Sigmoid colon (tissue), 7 donors: ENCODE measurements at regions of chr2 and their contacts with region 1.

Region 1: DNA sequence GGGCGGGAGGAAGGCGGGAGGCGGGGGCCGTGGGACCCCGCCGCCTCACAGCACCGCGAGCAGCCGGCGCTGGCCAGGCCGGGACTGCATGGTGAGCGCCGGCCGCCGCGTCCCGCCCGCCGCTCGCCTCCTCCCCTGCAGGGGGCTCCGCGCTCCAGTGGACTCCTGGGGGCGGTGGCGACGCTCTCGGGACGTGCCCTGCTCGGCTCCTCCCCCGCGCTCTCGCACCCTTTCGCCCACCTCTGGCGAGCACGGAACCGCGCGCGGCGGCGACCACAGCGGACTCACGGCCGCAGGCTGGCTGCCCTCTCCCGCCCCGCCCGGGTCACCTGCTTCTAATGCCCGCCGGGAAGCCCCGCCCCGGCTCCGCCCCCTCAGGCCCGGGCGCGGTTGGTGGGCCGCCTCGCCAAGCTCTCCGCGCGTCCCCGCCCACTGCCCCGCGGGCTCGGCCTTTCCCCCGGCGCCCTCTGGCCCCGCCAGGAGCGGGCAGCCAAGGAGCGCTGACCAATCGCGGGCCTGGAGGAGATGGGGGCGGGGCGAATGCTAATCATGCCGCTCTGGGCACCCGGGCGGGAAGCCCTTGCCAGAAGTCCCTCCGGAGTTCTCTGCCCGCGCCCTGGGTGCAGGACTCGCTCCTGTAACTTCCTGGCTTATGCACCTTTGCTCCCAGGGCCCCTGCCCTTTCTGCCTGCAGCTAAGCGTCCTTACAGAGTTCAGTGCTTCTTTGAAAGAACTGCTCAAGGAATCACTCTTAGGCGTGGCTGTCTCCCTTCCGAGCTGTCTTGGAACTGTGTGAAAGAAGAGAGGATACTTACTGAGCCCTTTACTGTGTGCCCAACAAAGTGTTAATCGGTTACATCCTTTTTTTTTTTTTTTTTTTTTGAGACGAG is at the start of gene FZD5:
- DNase-seq: peak; percentile 97
- H3K4me3 ChIP-seq: peak within 1 kb of the TSS; percentile 75 to 98 (median 86)
- H3K27ac ChIP-seq: peak within 1 kb of the TSS; percentile 81 to 97 (median 92)
- H3K4me1 ChIP-seq: peaks cover 0 to 45% (median 40%) of the 10 kb centered on the region in 4 donors
- H3K27me3 ChIP-seq: no peaks in the 10 kb centered on the region
- CTCF ChIP-seq: peak in 3 of 4 experiments; percentile 22 to 71 (median 28)
- EP300 ChIP-seq: peak in 1 of 4 donors; percentile 35
- POLR2A ChIP-seq: peak in 1 of 2 donors; percentile 70
- total RNA-seq, gene FZD5: 29.3 to 52.0 (median 37.4) TPM

Region 2: GRCh38 chr2:207558106-207558505 is 211.7 kb before region 1 on chr2:
- intact Hi-C with region 1: no loop called
- DNase-seq: no peak
- H3K4me3 ChIP-seq: no peak overlapping the region
- H3K27ac ChIP-seq: peak overlapping the region; percentile 25 to 60 (median 46)
- H3K4me1 ChIP-seq: peaks cover 0 to 28% (median 15%) of the 10 kb centered on the region in 4 donors
- H3K27me3 ChIP-seq: no peaks in the 10 kb centered on the region
- CTCF ChIP-seq: no peak
- EP300 ChIP-seq: peak in 2 of 4 donors; percentile 11 to 47
- POLR2A ChIP-seq: no peak

Region 3: DNA sequence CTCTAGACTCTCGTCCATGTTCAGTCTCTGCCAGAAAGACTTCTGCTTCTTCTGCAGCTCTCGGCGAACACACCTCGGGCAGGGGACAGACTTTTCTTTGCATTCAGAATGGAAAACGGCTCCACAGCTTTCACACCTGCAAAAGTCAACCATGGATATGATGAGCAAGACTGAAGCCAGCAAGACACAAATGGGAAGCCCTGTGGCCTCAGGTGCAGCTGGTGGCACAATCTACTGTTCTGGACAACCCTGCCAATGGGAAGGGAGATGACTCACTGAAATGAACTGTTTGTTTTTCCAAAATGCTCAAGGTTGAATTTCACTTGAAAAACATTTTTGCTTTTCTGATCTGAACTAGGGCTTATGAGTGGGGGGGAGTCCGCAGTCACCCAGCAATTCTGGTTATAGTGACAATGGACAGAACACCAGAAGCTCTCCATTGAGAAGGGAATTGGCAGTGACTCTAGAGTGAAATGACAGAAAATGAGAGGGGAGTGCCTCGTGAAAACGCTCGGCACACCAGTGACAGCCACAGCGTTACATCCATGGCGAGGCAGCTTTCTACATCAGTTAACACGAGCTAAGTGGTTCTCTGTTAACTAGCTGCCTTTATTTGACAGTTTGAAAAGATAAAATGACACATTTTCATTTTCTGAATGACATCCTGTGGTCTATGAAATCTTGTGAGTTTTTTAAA is 58.7 kb after region 1 on chr2:
- intact Hi-C with region 1: loop called (anchors 2 kb)
- DNase-seq: no peak
- H3K4me3 ChIP-seq: no peak overlapping the region
- H3K27ac ChIP-seq: peak overlapping the region in 3 of 4 donors; percentile 81 to 89 (median 81)
- H3K4me1 ChIP-seq: peaks cover 3 to 57% (median 56%) of the 10 kb centered on the region in 4 donors
- H3K27me3 ChIP-seq: no peaks in the 10 kb centered on the region
- CTCF ChIP-seq: no peak
- EP300 ChIP-seq: no peak
- POLR2A ChIP-seq: no peak

Region 4: GRCh38 chr2:207902821-207903220 is 133.0 kb after region 1 on chr2:
- intact Hi-C with region 1: no loop called
- DNase-seq: no peak
- H3K4me3 ChIP-seq: no peak overlapping the region
- H3K27ac ChIP-seq: no peak overlapping the region
- H3K4me1 ChIP-seq: peaks cover 0 to 17% (median 4%) of the 10 kb centered on the region in 4 donors
- H3K27me3 ChIP-seq: no peaks in the 10 kb centered on the region
- CTCF ChIP-seq: no peak
- EP300 ChIP-seq: no peak
- POLR2A ChIP-seq: no peak